Naive thymus-derived CD4-positive, alpha-beta T cell (primary cell): ENCODE measurements at regions of chr12 and their contacts with region 1.

Region 1: GRCh38 chr12:31362759-31363415 is 36.9 kb upstream of the SINHCAF start:
- DNase-seq: peak in 5 of 9 donors; percentile 4 to 34 (median 17)
- ATAC-seq: peak; percentile 78
- H3K4me3 ChIP-seq: peak overlapping the region; percentile 8
- H3K4me3 Mint-ChIP-seq: peak overlapping the region; percentile 50 to 81 (median 74)
- H3K27ac ChIP-seq: no peak overlapping the region
- H3K27ac Mint-ChIP-seq: peak overlapping the region; percentile 12 to 91 (median 56)
- H3K4me1 ChIP-seq: peaks cover 4 to 11% of the 10 kb centered on the region in 2 donors
- H3K4me1 Mint-ChIP-seq: peaks cover 12 to 27% (median 18%) of the 10 kb centered on the region in 7 donors
- H3K27me3 ChIP-seq: no peaks in the 10 kb centered on the region
- H3K27me3 Mint-ChIP-seq: no peaks in the 10 kb centered on the region

Region 2: DNA sequence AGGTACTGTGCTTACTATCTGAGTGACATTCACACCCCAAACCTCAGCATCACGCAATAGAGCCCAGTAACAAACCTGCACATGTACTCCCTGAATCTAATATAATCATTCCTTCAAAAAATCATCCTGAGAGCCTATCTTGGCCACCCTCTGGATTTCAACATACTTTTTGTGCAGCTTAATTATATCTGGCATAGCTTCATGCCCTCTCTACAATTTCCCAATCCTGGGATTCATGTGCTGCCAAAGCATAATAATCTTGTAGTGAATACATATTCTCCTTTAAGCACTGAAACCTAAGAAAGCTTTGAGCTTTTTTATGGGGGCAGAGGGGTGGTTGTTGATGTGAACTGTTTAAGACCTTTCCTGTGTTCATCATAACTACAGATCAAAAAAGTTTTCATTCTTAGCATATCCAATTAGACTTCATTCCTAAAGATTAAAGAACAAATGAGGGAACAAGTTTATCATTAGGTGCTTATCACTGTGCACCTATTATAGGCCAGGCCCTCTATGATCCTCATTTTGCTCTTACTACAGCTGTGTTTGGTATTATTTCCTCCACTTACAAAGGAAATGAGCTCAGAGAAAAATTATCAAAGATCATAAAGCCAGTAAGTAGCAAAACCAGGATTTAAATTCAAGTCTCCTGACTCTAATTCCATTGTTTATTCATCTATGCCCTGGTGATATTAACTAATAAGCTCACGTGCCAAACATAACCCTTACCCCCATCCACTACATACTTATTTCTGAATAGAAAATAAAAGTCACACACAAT is 88.2 kb before region 1 on chr12:
- CTCF ChIA-PET with region 1: no interaction called
- POLR2A ChIA-PET with region 1: no interaction called
- intact Hi-C with region 1: loop called in 1 of 2 experiments (anchors 5 kb)
- DNase-seq: no peak
- ATAC-seq: no peak
- H3K4me3 ChIP-seq: no peak overlapping the region
- H3K4me3 Mint-ChIP-seq: no peak overlapping the region
- H3K27ac ChIP-seq: no peak overlapping the region
- H3K27ac Mint-ChIP-seq: peak overlapping the region in 5 of 9 donors; percentile 25 to 88 (median 51)
- H3K4me1 ChIP-seq: no peaks in the 10 kb centered on the region
- H3K4me1 Mint-ChIP-seq: peaks cover 0 to 7% (median 0%) of the 10 kb centered on the region in 7 donors
- H3K27me3 ChIP-seq: no peaks in the 10 kb centered on the region
- H3K27me3 Mint-ChIP-seq: no peaks in the 10 kb centered on the region

Region 3: GRCh38 chr12:31297572-31298512 is 65.0 kb before region 1 on chr12:
- CTCF ChIA-PET with region 1: no interaction called
- POLR2A ChIA-PET with region 1: no interaction called
- intact Hi-C with region 1: loop called in 1 of 2 experiments (anchors 5 kb)
- DNase-seq: no peak
- ATAC-seq: no peak
- H3K4me3 ChIP-seq: no peak overlapping the region
- H3K4me3 Mint-ChIP-seq: no peak overlapping the region
- H3K27ac ChIP-seq: peak overlapping the region; percentile 14
- H3K27ac Mint-ChIP-seq: peak overlapping the region in 6 of 9 donors; percentile 28 to 84 (median 54)
- H3K4me1 ChIP-seq: peaks cover 0 to 9% of the 10 kb centered on the region in 2 donors
- H3K4me1 Mint-ChIP-seq: peaks cover 11 to 35% (median 31%) of the 10 kb centered on the region in 7 donors
- H3K27me3 ChIP-seq: no peaks in the 10 kb centered on the region
- H3K27me3 Mint-ChIP-seq: no peaks in the 10 kb centered on the region

Region 4: DNA sequence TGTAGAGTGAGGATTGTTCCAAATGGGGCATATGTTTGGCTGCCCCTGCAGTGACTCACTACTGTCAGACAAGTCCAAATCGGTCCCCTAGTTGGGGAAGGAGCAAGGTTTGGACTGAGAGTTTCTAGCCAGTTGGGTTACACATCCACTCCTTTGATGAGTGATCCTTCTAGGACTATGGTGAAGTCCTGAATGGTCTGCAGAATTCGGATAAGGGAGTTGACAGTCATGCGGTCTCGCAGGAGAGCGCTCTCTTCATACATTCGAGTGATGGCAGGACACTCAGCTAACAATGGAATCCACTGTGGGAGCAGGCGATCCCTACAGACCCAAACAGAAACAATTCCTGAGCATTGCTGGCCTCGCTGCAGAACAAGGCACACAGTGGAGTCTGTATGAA is 24.6 kb after region 1 on chr12:
- CTCF ChIA-PET with region 1: no interaction called
- POLR2A ChIA-PET with region 1: no interaction called
- intact Hi-C with region 1: no loop called
- DNase-seq: no peak
- ATAC-seq: no peak
- H3K4me3 ChIP-seq: no peak overlapping the region
- H3K4me3 Mint-ChIP-seq: no peak overlapping the region
- H3K27ac ChIP-seq: no peak overlapping the region
- H3K27ac Mint-ChIP-seq: no peak overlapping the region
- H3K4me1 ChIP-seq: no peaks in the 10 kb centered on the region
- H3K4me1 Mint-ChIP-seq: no peaks in the 10 kb centered on the region
- H3K27me3 ChIP-seq: no peaks in the 10 kb centered on the region
- H3K27me3 Mint-ChIP-seq: peaks cover 0 to 25% (median 9%) of the 10 kb centered on the region in 5 donors